ENCODE measurements at regions of chr10 and their contacts with region 1.

Region 1: GRCh38 chr10:87659571-87660483 is at the start of gene PAPSS2:
- DNase-seq: peak; percentile 72
- H3K4me3 ChIP-seq: peak within 1 kb of the TSS; percentile 89
- H3K27ac ChIP-seq: peak within 1 kb of the TSS; percentile 80
- H3K4me1 ChIP-seq: peaks cover 39% of the 10 kb centered on the region
- H3K27me3 ChIP-seq: no peaks in the 10 kb centered on the region
- CTCF ChIP-seq: no peak
- total RNA-seq, gene PAPSS2: 10.6 TPM

Region 2: GRCh38 chr10:87531908-87532622 is 127.8 kb before region 1 on chr10:
- intact Hi-C with region 1: loop called (anchors 10 kb)
- DNase-seq: no peak
- H3K4me3 ChIP-seq: peak overlapping the region; percentile 35
- H3K27ac ChIP-seq: peak overlapping the region; percentile 80
- H3K4me1 ChIP-seq: peaks cover 26% of the 10 kb centered on the region
- H3K27me3 ChIP-seq: no peaks in the 10 kb centered on the region
- CTCF ChIP-seq: no peak

Region 3: GRCh38 chr10:87715552-87716347 is 55.9 kb after region 1 on chr10:
- intact Hi-C with region 1: loop called (anchors 10 kb)
- DNase-seq: no peak
- H3K4me3 ChIP-seq: no peak overlapping the region
- H3K27ac ChIP-seq: peak overlapping the region; percentile 73
- H3K4me1 ChIP-seq: peaks cover 40% of the 10 kb centered on the region
- H3K27me3 ChIP-seq: no peaks in the 10 kb centered on the region
- CTCF ChIP-seq: no peak

Region 4: DNA sequence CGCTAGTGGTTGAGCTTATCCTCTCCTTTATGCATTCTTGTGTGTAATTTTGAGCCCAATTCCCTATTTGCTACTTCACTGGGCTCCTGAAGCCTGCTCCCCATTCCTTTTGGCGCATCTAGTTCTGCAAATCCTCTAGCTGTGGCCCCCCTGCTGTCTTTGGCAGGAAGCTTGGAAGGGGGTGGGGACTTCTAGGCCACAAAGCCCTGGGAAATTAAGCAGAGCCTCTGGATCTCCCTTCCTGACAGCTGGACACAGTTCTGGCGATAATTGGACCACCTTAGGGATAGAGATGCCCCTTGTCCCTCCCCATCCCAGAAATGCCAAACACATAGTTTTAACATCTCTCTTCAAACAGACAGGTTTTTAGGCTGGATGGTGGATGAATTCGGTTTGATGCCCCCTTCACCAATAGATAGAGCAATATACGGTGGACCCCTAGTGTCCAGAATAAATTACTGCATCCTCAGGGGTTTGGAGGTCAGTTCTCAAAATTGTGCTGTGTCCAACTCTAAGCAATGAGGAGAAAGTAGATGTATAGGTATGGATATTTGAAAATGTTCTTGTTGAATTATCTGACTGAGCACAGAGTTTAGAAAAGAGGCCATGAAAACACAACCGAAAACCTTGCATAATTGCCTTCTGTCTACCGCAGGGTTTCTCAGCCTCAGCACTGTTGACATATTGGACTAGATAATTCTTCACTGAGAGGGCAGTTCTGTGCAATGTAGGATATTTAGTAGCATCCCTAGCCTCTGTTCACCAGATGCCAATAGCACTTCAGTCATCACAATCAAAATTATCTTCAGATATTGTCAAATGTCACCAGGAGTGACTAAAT is 75.4 kb after region 1 on chr10:
- intact Hi-C with region 1: loop called (anchors 2 kb)
- DNase-seq: no peak
- H3K4me3 ChIP-seq: peak overlapping the region; percentile 7
- H3K27ac ChIP-seq: no peak overlapping the region
- H3K4me1 ChIP-seq: peaks cover 13% of the 10 kb centered on the region
- H3K27me3 ChIP-seq: no peaks in the 10 kb centered on the region
- CTCF ChIP-seq: peak; percentile 88

Measured in left ventricle myocardium inferior (tissue), 1 donor.